ENCODE measurements at regions of chrX and their contacts with region 1.

Region 1: GRCh38 chrX:139890991-139891700 is 41.7 kb downstream of the ATP11C start:
- DNase-seq: no peak
- H3K4me3 ChIP-seq: no peak overlapping the region
- H3K27me3 ChIP-seq: no peaks in the 10 kb centered on the region
- CTCF ChIP-seq: no peak

Region 2: GRCh38 chrX:139823806-139824205 is 67.3 kb before region 1 on chrX:
- CTCF ChIA-PET with region 1: no interaction called
- POLR2A ChIA-PET with region 1: interaction called, 12 read pairs
- DNase-seq: no peak
- H3K4me3 ChIP-seq: no peak overlapping the region
- H3K27me3 ChIP-seq: no peaks in the 10 kb centered on the region
- CTCF ChIP-seq: no peak

Region 3: DNA sequence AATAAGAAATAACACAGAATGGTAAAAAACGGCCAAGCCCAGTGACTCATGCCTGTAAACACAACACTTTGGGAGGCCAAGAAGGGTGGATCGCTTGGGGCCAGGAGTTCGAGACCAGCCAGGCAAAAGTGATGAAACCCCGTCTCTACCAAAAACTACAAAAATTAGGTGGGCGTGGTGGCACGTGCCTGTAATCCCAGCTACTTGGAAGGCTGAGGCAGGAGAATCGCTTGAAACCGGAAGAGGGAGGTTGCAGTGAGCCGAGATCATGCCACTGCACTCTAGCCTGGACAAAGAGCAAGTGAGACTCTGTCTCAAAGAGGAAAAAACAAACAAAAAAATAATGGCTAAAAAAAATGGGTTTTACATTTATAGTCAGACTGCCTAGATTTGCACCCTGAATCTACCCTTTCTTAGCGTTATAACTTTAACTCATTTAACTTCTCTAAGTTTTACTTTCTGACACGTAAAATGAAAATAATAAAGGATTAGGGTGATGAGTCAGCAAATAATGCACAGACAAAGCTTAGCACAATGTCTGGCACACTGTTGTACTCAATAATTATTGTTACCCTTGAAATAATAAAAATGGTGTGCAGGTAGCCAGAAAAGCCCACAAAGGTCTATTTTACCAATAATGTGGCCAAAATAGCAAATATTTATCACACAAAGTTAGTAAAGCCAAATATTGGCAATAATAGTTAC is 13.3 kb before region 1 on chrX:
- CTCF ChIA-PET with region 1: no interaction called
- POLR2A ChIA-PET with region 1: no interaction called
- DNase-seq: no peak
- H3K4me3 ChIP-seq: no peak overlapping the region
- H3K27me3 ChIP-seq: no peaks in the 10 kb centered on the region
- CTCF ChIP-seq: no peak

Measured in BJ (cell line).